H1 (cell line): ENCODE measurements at regions of chr7 and their contacts with region 1.

Region 1: GRCh38 chr7:42186212-42186611 is 50.8 kb downstream of the GLI3 start:
- DNase-seq: peak; percentile 13 to 69
- H3K4me3 ChIP-seq: no peak overlapping the region
- H3K27ac ChIP-seq: no peak overlapping the region
- H3K4me1 ChIP-seq: peaks cover 0 to 3% (median 0%) of the 10 kb centered on the region in 4 experiments; a peak in 1 of 7 replicates
- H3K27me3 ChIP-seq: no peaks in the 10 kb centered on the region
- CTCF ChIP-seq: peak; percentile 68 to 80 (median 80)
- EP300 ChIP-seq: no peak
- POLR2A ChIP-seq: no peak
- RAD21 ChIP-seq: peak; percentile 49 to 63

Region 2: GRCh38 chr7:42151309-42151708 is 34.9 kb before region 1 on chr7:
- CTCF ChIA-PET with region 1: interaction called, 25 read pairs
- POLR2A ChIA-PET with region 1: no interaction called
- DNase-seq: no peak
- H3K4me3 ChIP-seq: no peak overlapping the region
- H3K27ac ChIP-seq: no peak overlapping the region
- H3K4me1 ChIP-seq: peaks cover 2 to 15% (median 11%) of the 10 kb centered on the region in 4 experiments; a peak in 4 of 7 replicates
- H3K27me3 ChIP-seq: no peaks in the 10 kb centered on the region
- CTCF ChIP-seq: no peak
- EP300 ChIP-seq: no peak
- POLR2A ChIP-seq: no peak
- RAD21 ChIP-seq: no peak

Region 3: GRCh38 chr7:42159130-42159529 is 27.1 kb before region 1 on chr7:
- CTCF ChIA-PET with region 1: interaction called, 25 read pairs
- POLR2A ChIA-PET with region 1: no interaction called
- DNase-seq: no peak
- H3K4me3 ChIP-seq: no peak overlapping the region
- H3K27ac ChIP-seq: no peak overlapping the region
- H3K4me1 ChIP-seq: peaks cover 0 to 6% (median 0%) of the 10 kb centered on the region in 4 experiments; a peak in 1 of 7 replicates
- H3K27me3 ChIP-seq: no peaks in the 10 kb centered on the region
- CTCF ChIP-seq: no peak
- EP300 ChIP-seq: no peak
- POLR2A ChIP-seq: no peak
- RAD21 ChIP-seq: no peak

Region 4: DNA sequence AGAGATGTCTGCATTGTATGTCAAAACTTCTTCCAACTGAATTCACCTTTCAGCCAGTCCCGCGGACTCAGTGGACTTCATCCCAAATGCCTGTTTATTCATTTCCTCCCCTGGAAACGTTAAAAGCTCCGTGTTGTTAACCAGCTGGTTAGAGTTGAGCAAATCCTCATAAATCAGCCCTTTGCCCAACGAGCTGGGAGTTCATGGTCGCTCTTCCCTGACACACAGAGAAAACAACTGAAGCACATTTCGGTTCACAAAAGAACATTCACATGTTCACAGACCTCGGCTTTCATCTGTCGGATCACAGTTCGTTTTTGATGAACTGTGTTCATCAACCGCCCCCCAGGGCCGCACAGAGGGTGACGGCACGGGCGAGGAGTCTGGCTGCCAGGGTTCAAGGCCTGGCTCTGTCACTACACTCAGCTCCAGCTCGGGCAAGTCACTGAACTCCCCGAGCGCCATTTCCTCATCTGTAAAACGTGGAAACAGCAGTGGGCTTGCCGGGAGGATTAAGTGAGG is 11.8 kb before region 1 on chr7:
- CTCF ChIA-PET with region 1: interaction called, 50 read pairs
- POLR2A ChIA-PET with region 1: no interaction called
- DNase-seq: no peak
- H3K4me3 ChIP-seq: no peak overlapping the region
- H3K27ac ChIP-seq: no peak overlapping the region
- H3K4me1 ChIP-seq: no peaks in the 10 kb centered on the region; a peak in 1 of 7 replicates
- H3K27me3 ChIP-seq: no peaks in the 10 kb centered on the region
- CTCF ChIP-seq: no peak
- EP300 ChIP-seq: no peak
- POLR2A ChIP-seq: no peak
- RAD21 ChIP-seq: no peak

Region 5: GRCh38 chr7:42227936-42228591 is 41.9 kb after region 1 on chr7:
- CTCF ChIA-PET with region 1: interaction called, 20 read pairs
- POLR2A ChIA-PET with region 1: interaction called, 4 read pairs
- DNase-seq: peak in 1 of 2 experiments; percentile 76
- H3K4me3 ChIP-seq: peak overlapping the region; percentile 42 to 67 (median 52)
- H3K27ac ChIP-seq: peak overlapping the region; percentile 87
- H3K4me1 ChIP-seq: peaks cover 5 to 30% (median 22%) of the 10 kb centered on the region in 4 experiments; a peak in 6 of 7 replicates
- H3K27me3 ChIP-seq: no peaks in the 10 kb centered on the region
- CTCF ChIP-seq: no peak
- EP300 ChIP-seq: no peak
- POLR2A ChIP-seq: no peak; a peak in 1 of 3 replicates
- RAD21 ChIP-seq: no peak